Heart left ventricle (tissue), 16 donors: ENCODE measurements at regions of chr1 and their contacts with region 1.

Region 1: DNA sequence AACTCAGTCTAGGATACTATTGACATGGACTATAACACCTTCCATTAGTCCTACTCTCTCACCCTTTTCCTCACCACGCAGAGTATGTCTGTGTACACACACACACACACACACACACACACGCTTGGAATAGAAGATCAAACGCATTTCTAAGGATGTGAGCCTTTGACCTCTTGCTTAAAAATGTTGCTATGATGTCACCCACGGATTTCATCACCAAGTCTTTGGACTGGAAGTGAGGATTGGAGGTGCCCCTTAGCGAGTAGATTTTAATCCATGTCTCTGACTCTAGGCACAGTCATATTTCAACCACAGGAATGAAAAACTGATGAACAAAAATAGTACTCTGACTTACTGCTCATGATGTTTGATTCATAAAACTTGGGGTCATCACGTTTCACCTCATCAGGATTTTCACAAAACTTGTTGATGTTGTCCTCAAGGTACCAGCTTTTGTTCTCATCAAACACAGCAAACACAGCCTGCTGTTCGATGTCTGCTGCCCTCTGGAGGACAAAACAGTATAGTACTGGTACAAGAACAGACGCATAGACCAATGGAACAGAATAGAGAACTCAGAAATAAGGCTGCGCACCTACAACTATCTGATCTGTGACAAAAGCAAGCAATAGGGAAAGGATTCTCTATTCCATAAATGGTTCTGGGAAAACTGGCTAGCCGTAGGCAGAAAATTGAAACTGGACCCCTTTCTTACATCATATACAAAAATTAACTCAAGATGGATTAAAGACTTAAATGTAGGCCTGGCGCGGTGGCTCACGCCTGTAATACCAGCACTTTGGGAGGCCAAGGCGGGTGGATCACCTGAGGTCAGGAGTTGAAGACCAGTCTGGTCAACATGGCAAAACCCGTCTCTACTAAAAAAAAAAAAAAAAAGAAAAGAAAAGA is 39.9 kb downstream of the F5 start:
- DNase-seq: peak in 4 of 5 donors; percentile 33 to 53 (median 40)
- ATAC-seq: peak; percentile 76 to 93 (median 84)
- H3K4me3 ChIP-seq: no peak overlapping the region
- H3K27ac ChIP-seq: no peak overlapping the region
- H3K4me1 ChIP-seq: no peaks in the 10 kb centered on the region
- H3K27me3 ChIP-seq: no peaks in the 10 kb centered on the region
- CTCF ChIP-seq: peak; percentile 64 to 88 (median 78)
- POLR2A ChIP-seq: no peak

Region 2: DNA sequence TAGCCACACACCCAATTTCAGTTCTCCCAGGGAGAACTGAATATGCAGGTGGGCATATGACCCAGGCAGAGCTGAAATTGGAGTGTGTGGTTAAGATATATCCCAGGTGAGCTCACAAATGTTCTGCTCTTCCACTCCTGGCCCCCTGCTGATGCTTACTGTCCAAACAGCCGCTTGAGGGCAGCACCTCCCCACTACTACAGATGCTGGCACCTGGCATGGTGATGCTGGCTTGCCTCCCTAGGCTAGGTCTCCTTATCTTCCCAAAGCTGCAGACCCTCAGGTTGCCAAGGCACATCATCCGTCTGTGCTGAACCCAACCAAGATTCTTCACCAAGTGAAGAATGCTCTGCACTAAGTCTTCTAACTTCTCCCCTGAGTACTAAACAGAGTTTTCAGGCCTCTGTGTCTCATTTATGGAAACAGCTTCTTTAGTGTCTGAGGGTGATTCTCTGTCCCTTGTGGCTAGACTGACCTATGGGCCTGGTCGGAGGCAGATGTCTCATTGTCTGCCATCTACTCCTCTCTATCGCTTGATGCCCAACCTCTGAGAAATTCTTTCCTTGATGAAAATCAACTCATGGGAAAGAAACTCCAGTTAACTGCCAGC is 942.7 kb before region 1 on chr1:
- intact Hi-C with region 1: loop called in 8 of 10 experiments (anchors 5 to 10 kb)
- DNase-seq: peak; percentile 69 to 86 (median 79)
- ATAC-seq: peak; percentile 63 to 91 (median 90)
- H3K4me3 ChIP-seq: no peak overlapping the region
- H3K27ac ChIP-seq: no peak overlapping the region
- H3K4me1 ChIP-seq: peaks cover 0 to 17% (median under 1%) of the 10 kb centered on the region in 12 donors
- H3K27me3 ChIP-seq: no peaks in the 10 kb centered on the region
- CTCF ChIP-seq: peak; percentile 68 to 90 (median 82)
- POLR2A ChIP-seq: no peak

Region 3: GRCh38 chr1:169466259-169467230 is 79.8 kb before region 1 on chr1:
- intact Hi-C with region 1: loop called in 9 of 10 experiments (anchors 2 to 5 kb)
- DNase-seq: no peak
- ATAC-seq: peak in 2 of 4 donors; percentile 32 to 35
- H3K4me3 ChIP-seq: no peak overlapping the region
- H3K27ac ChIP-seq: no peak overlapping the region
- H3K4me1 ChIP-seq: peaks cover 0 to 4% (median 0%) of the 10 kb centered on the region in 12 donors
- H3K27me3 ChIP-seq: no peaks in the 10 kb centered on the region
- CTCF ChIP-seq: peak in 10 of 12 donors; percentile 7 to 55 (median 42)
- POLR2A ChIP-seq: no peak

Region 4: DNA sequence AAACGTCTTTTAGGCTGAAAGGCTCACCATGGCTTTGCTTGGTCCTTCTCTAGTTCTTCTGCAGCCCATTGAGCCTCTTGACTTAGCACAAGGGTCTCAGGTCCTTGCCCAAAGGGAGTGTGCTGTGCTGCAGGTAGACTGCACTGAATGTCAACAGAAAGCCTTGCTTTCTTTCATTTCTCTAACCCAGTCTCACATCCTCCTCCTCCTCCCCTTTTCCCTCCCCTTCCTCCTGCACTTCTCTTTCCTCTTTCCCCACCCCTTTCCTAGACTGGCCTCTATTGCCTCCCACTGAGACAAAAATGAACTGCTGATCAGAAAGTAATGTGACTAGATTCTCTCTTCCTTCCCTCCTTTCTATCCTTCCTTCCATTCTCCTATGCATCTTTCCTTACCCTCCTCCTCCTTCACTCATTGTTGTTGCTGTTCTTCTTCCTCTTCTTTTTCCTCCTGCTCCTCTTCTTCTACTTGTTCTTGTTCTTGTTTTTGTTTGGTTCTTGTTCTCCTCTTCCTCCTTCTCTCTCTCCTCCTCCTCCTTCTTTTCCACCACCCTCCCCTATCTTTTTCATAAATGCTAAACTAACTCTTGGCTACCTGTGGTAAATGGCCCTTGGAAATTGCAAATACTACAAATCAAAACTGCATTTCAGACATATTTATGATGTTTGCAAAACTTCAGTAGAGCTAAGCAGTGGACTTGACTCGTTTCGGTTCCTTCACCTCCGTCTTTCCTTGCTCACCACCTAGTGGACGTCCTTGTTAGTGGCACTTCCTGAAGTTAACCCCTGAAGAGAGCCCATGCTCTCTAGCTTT is 165.3 kb after region 1 on chr1 and contains the start of gene SELL:
- intact Hi-C with region 1: loop called in 4 of 10 experiments (anchors 2 to 5 kb)
- DNase-seq: peak in 4 of 5 donors; percentile 48 to 59 (median 52)
- ATAC-seq: peak; percentile 86 to 96 (median 89)
- H3K4me3 ChIP-seq: peak within 1 kb of the TSS in 9 of 12 donors; percentile 18 to 52 (median 40)
- H3K27ac ChIP-seq: peak within 1 kb of the TSS in 3 of 12 donors; percentile 25 to 55 (median 39)
- H3K4me1 ChIP-seq: peaks cover 0 to 25% (median 0%) of the 10 kb centered on the region in 12 donors
- H3K27me3 ChIP-seq: peaks cover 0 to 12% (median 0%) of the 10 kb centered on the region in 9 donors
- CTCF ChIP-seq: peak; percentile 58 to 81 (median 74)
- POLR2A ChIP-seq: no peak
- total RNA-seq, gene SELL: 1.3 to 10.6 (median 2.4) TPM